Psoas muscle (tissue), 8 donors: ENCODE measurements at regions of chr19 and their contacts with region 1.

Region 1: DNA sequence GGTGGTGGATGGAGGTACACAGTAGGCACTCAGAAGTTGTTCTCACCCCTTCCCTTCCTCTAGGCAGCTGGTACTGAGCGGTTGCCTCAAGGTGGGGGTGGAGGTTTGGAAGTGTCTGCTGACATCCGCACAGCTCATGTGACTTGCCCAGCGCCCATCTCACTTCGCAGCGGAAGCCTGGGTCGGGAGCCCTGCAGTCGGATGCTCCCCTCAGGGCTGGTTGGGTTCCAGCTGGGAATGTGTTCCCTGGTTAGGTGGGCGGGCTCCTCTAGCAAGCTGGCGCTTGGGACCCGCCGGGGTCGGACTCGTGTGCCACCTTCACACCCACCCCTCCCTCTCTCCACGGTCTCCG is 10.2 kb downstream of the PPP1R37 start:
- DNase-seq: no peak
- ATAC-seq: no peak
- H3K4me3 ChIP-seq: no peak overlapping the region
- H3K27ac ChIP-seq: no peak overlapping the region
- H3K4me1 ChIP-seq: peaks cover 68% of the 10 kb centered on the region
- H3K27me3 ChIP-seq: no peaks in the 10 kb centered on the region
- CTCF ChIP-seq: no peak

Region 2: GRCh38 chr19:45981350-45981749 is 878.2 kb after region 1 on chr19:
- intact Hi-C with region 1: loop called in 1 of 2 experiments (anchors 10 kb)
- DNase-seq: no peak
- ATAC-seq: no peak
- H3K4me3 ChIP-seq: no peak overlapping the region
- H3K27ac ChIP-seq: no peak overlapping the region
- H3K4me1 ChIP-seq: no peaks in the 10 kb centered on the region
- H3K27me3 ChIP-seq: peaks cover 0 to 25% (median under 1%) of the 10 kb centered on the region in 3 donors
- CTCF ChIP-seq: no peak